Ascending aorta (tissue), 2 donors: ENCODE measurements at regions of chr18 and their contacts with region 1.

Region 1: DNA sequence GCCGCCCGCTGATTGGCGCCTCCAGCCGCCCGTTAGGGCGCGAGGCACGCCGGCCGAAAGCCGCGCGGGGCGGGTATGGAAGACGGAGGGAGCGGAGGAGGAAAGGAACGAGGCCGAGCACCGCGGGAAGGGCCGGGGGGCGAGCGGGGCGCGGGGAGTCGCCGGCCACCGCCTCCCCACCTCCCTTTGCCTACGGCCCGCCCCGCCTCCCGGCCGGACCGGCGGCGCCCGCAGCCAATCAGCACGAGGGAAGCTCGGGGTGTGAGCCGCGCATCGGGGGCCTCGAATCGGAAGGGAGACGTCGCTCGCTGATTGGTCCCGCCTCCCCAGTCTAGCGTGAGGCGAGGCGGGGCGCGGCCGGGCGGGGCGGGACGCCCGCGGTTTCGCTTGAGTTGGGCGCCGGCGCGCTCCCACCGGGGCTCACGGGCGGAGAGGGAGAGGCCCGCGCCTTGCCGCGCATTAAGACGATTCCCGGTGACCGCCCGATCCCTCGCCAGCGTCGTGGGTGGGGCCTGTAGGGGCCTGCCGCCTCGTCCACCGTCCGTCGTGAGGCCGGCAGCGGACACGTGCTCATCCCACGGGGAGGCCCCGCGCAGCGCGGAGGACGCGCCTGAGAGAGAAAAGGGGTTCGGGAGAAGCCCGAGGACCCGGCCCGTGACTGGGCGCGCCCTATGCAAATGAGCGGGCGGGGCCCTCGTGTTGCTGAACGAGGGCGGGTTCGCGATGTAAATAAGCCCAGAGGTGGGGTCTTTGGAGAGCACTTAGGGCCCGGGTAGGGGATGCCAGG is 665 bp upstream of the SMAD2 start:
- DNase-seq: peak; percentile 86 to 98
- H3K4me3 ChIP-seq: peak overlapping the region; percentile 97 to 98
- H3K27ac ChIP-seq: peak overlapping the region; percentile 96 to 98
- H3K4me1 ChIP-seq: peaks cover 4 to 18% of the 10 kb centered on the region in 2 donors
- H3K27me3 ChIP-seq: no peaks in the 10 kb centered on the region
- CTCF ChIP-seq: no peak

Region 2: GRCh38 chr18:47150029-47150823 is 780.9 kb before region 1 on chr18 and contains the start of gene HDHD2:
- intact Hi-C with region 1: loop called (anchors 10 kb)
- DNase-seq: peak; percentile 18 to 88
- H3K4me3 ChIP-seq: peak within 1 kb of the TSS; percentile 72 to 98
- H3K27ac ChIP-seq: peak within 1 kb of the TSS; percentile 86 to 96
- H3K4me1 ChIP-seq: peaks cover 6 to 10% of the 10 kb centered on the region in 2 donors
- H3K27me3 ChIP-seq: no peaks in the 10 kb centered on the region
- CTCF ChIP-seq: no peak
- total RNA-seq, gene HDHD2: 3.5 TPM

Region 3: DNA sequence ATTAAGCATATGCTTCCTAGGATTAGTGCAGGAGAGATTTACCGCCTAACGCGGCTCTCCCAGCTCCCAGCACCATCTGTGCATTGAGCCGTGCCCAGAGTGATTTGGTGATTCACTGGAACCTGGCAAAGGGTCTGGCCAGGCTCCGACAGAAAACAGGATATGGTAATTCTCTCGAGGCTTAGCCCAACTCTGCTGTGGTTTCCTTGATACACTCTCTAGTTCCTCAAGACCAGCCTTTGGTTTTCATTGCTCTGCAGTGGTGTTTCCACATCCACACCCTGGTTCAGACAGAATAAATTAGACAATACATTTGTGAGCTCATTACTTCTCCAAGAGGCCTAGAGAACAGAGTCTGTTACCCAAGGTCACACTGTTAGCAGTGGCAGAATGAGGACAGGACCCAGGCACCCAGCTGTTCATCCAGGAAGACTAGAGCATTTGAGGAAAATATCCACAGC is 22.4 kb after region 1 on chr18:
- intact Hi-C with region 1: loop called (anchors 2 kb)
- DNase-seq: peak; percentile 13 to 82
- H3K4me3 ChIP-seq: no peak overlapping the region
- H3K27ac ChIP-seq: peak overlapping the region; percentile 74 to 78
- H3K4me1 ChIP-seq: peaks cover 0 to 5% of the 10 kb centered on the region in 2 donors
- H3K27me3 ChIP-seq: no peaks in the 10 kb centered on the region
- CTCF ChIP-seq: no peak

Region 4: DNA sequence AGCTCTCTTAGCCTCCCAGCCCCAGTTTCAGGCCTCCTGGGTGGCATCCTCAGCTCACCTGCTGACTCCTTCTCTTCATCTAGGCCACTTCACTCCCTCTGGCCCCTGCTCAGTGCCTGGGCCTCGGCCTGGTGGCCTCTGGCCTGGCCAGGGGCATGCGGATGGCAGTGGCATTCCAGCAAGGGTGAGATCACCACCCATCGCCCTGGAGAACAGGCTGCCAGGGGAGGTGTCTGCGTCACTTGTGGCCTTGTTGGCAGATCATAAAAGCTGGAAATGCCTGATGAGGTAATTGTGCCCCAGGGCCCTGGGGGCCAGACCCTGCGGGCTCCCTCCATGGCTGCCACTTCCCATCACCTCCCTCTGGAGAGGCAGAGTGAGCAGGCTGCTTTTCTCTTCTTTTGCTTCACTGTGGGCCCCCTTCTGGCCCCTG is 71.8 kb after region 1 on chr18:
- intact Hi-C with region 1: loop called (anchors 1 kb)
- DNase-seq: peak; percentile 59 to 91
- H3K4me3 ChIP-seq: no peak overlapping the region
- H3K27ac ChIP-seq: peak overlapping the region; percentile 70 to 84
- H3K4me1 ChIP-seq: peaks cover 4 to 9% of the 10 kb centered on the region in 2 donors
- H3K27me3 ChIP-seq: no peaks in the 10 kb centered on the region
- CTCF ChIP-seq: no peak

Region 5: DNA sequence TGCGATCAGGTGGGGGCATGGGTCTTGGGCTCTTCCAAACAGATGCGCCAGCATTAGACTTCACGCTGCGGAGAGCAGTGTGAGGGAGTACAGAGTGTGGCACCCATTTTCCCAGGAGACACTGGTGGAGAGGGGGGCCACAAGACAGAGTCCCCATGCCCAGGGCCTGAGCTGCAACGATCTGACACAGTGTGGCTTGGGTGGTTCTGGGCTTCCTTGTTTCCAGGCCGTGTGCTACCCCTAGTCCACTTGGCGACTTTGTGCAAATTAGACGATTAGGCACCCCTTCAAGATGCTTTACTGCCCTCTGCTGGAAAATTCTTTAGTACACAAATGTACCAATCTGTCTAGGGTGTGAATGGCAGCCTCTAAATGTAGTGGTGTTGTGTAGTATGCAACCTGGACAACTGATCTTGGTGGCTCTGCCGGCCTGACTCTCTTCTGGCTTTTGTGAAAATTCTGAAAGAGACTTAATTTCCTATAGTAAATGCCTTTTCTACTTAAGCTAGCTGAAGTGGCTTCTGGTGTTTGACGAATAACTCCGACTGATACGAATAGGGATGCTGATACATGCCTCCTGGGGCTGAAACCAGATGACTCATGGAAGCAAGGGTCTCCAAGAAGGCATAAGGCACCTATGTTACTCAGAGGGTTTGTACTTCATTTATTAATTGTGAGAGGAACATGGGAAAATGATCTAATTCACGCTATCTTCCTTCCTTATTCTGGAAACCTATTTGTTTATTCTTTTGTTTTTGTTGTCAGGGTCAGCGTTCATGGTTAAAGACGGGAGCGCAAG is 91.6 kb after region 1 on chr18:
- intact Hi-C with region 1: loop called (anchors 5 kb)
- DNase-seq: peak in 1 of 2 donors; percentile 64
- H3K4me3 ChIP-seq: no peak overlapping the region
- H3K27ac ChIP-seq: no peak overlapping the region
- H3K4me1 ChIP-seq: peaks cover 5 to 8% of the 10 kb centered on the region in 2 donors
- H3K27me3 ChIP-seq: no peaks in the 10 kb centered on the region
- CTCF ChIP-seq: peak; percentile 42 to 58 (median 47)

Region 6: GRCh38 chr18:48410095-48410920 is 479.2 kb after region 1 on chr18:
- intact Hi-C with region 1: loop called (anchors 1 kb)
- DNase-seq: peak; percentile 62 to 95
- H3K4me3 ChIP-seq: peak overlapping the region; percentile 95 to 98
- H3K27ac ChIP-seq: peak overlapping the region; percentile 91 to 92
- H3K4me1 ChIP-seq: peaks cover 4 to 13% of the 10 kb centered on the region in 2 donors
- H3K27me3 ChIP-seq: no peaks in the 10 kb centered on the region
- CTCF ChIP-seq: no peak

Region 7: GRCh38 chr18:49486953-49487710 is 1556.0 kb after region 1 on chr18 and contains the start of gene C18orf32:
- intact Hi-C with region 1: loop called (anchors 5 kb)
- DNase-seq: peak; percentile 71 to 97
- H3K4me3 ChIP-seq: peak within 1 kb of the TSS; percentile 58 to 96
- H3K27ac ChIP-seq: peak within 1 kb of the TSS; percentile 93 to 98
- H3K4me1 ChIP-seq: peaks cover 4 to 13% of the 10 kb centered on the region in 2 donors
- H3K27me3 ChIP-seq: no peaks in the 10 kb centered on the region
- CTCF ChIP-seq: no peak
- total RNA-seq, gene C18orf32: 7.8 TPM